GM12878 (cell line): ENCODE measurements at regions of chr7 and their contacts with region 1.

Region 1: GRCh38 chr7:8125680-8126444 is 136.1 kb downstream of the ICA1 start:
- DNase-seq: peak; percentile 95
- ATAC-seq: peak; percentile 80
- H3K4me3 ChIP-seq: no peak overlapping the region; the same call in 1 of the 2 replicates
- H3K27ac ChIP-seq: peak overlapping the region; percentile 90
- H3K4me1 ChIP-seq: peaks cover 68% of the 10 kb centered on the region
- H3K27me3 ChIP-seq: no peaks in the 10 kb centered on the region
- CTCF ChIP-seq: no peak
- EP300 ChIP-seq: peak; percentile 66 to 81
- POLR2A ChIP-seq: peak; percentile 74
- RAD21 ChIP-seq: peak; percentile 25

Region 2: DNA sequence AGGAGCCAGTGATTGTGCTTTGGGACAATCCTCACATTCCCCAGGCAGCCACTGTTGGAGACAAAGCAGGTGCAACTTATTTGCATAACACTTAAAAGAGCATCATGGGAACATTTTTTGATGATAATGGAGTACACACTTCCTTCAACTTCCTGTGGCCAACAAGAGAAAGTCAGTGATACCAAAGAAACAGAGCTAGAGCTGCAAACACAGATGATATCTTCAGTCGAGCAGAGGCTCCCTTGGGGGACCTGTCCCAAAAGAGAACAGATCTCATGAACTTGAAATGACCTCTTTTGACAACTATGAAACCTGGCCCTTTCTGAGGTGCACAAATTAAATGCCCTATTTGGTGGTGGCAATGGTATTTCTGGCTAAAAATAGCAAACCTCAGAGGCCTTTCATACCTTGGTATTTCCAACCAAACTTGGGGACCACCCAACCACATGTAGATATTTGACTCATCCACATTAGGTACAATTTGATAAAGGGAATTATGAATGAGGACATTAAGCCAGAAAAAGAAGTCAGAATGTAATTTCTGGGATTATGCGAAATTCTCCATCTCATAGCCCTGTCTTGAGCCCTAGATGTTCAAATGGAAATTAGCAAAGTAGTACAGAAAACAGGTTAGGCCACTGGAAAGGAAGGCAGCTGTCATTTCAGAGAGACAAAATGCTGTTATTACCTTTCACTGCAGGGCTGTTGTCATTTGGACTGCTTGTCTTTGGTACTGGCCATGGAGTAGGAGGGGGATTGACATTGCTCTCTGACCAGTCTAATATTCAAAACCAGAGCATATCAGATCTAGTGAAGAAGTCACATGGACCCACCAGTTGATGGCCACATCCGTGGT is 10.1 kb before region 1 on chr7:
- CTCF ChIA-PET with region 1: interaction called, 16 read pairs
- POLR2A ChIA-PET with region 1: interaction called, 133 read pairs
- RAD21 ChIA-PET with region 1: interaction called, 124 read pairs
- SMC1A ChIA-PET with region 1: interaction called, 182 read pairs
- in situ Hi-C with region 1: no loop called
- intact Hi-C with region 1: loop called (anchors 1 kb)
- DNase-seq: peak; percentile 98
- ATAC-seq: peak; percentile 85
- H3K4me3 ChIP-seq: no peak overlapping the region
- H3K27ac ChIP-seq: peak overlapping the region; percentile 56
- H3K4me1 ChIP-seq: peaks cover 43% of the 10 kb centered on the region
- H3K27me3 ChIP-seq: no peaks in the 10 kb centered on the region
- CTCF ChIP-seq: no peak
- EP300 ChIP-seq: peak; percentile 77 to 93; a peak in 2 of 4 replicates
- POLR2A ChIP-seq: no peak
- RAD21 ChIP-seq: peak; percentile 30; the same call in 1 of the 2 replicates

Region 3: GRCh38 chr7:8149222-8149621 is 23.4 kb after region 1 on chr7:
- CTCF ChIA-PET with region 1: no interaction called
- POLR2A ChIA-PET with region 1: interaction called, 5 read pairs
- RAD21 ChIA-PET with region 1: interaction called, 9 read pairs
- SMC1A ChIA-PET with region 1: interaction called, 10 read pairs
- in situ Hi-C with region 1: no loop called
- intact Hi-C with region 1: no loop called
- DNase-seq: no peak
- ATAC-seq: peak; percentile 79
- H3K4me3 ChIP-seq: no peak overlapping the region
- H3K27ac ChIP-seq: peak overlapping the region; percentile 16
- H3K4me1 ChIP-seq: peaks cover 8% of the 10 kb centered on the region; the same call in 1 of the 2 replicates
- H3K27me3 ChIP-seq: no peaks in the 10 kb centered on the region
- CTCF ChIP-seq: no peak
- EP300 ChIP-seq: no peak
- POLR2A ChIP-seq: no peak
- RAD21 ChIP-seq: no peak

Region 4: GRCh38 chr7:8418629-8419245 is 292.9 kb after region 1 on chr7:
- CTCF ChIA-PET with region 1: no interaction called
- POLR2A ChIA-PET with region 1: no interaction called
- RAD21 ChIA-PET with region 1: no interaction called
- SMC1A ChIA-PET with region 1: no interaction called
- in situ Hi-C with region 1: no loop called
- intact Hi-C with region 1: no loop called
- DNase-seq: peak; percentile 19
- ATAC-seq: peak; percentile 91
- H3K4me3 ChIP-seq: no peak overlapping the region
- H3K27ac ChIP-seq: no peak overlapping the region
- H3K4me1 ChIP-seq: no peaks in the 10 kb centered on the region
- H3K27me3 ChIP-seq: no peaks in the 10 kb centered on the region; a peak in 1 of 4 replicates
- CTCF ChIP-seq: peak; percentile 60 to 72 (median 69); a peak in 5 of 6 replicates
- EP300 ChIP-seq: no peak
- POLR2A ChIP-seq: no peak
- RAD21 ChIP-seq: peak; percentile 73